Activated naive CD4-positive, alpha-beta T cell treated with anti-CD3 and anti-CD28 coated beads for 36 hours (primary cell): ENCODE measurements at regions of chr14 and their contacts with region 1.

Region 1: DNA sequence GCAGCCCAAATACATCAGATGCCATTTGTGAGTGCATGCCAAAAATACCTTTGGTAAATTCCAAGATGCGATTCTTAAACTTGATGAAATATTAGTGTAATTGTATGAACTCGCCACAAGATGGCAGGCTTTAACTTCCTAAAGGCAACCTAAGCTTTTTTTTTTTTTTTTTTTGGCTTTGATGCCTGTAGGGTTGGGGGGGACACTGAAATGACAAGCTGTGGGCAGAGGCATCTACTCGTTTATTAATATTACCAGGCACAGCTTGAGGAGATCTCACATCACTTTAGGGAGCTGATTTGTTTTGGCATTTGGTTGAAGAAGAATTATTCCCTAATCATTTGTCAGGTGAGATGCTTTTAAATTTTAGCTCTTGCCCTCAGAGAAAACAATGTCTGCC is 126.7 kb upstream of the CCDC196 start:
- DNase-seq: peak; percentile 10
- H3K4me3 Mint-ChIP-seq: no peak overlapping the region
- H3K27ac Mint-ChIP-seq: no peak overlapping the region
- H3K4me1 Mint-ChIP-seq: no peaks in the 10 kb centered on the region
- H3K27me3 Mint-ChIP-seq: no peaks in the 10 kb centered on the region

Region 2: DNA sequence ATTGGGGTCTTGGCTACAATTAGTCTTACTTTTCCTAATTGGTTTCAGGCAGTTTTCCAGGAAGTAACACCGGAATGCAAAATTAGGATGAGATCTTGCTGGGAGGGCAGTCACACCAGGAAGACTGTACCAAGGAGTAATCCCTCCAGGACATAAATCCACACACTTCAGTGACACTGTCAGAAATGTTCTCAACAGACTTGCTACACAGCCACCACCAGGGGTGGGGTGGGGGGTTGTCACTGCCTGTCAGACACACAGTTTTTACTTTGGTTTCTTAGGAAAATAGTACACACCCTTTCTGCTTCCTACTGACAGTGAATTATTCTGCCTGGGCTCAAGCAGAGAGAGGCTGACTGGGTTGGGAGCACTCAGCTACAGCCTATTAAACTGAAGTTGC is 23.8 kb after region 1 on chr14:
- CTCF ChIA-PET with region 1: interaction called, 10 read pairs
- intact Hi-C with region 1: no loop called
- DNase-seq: no peak
- H3K4me3 Mint-ChIP-seq: no peak overlapping the region
- H3K27ac Mint-ChIP-seq: no peak overlapping the region
- H3K4me1 Mint-ChIP-seq: no peaks in the 10 kb centered on the region
- H3K27me3 Mint-ChIP-seq: no peaks in the 10 kb centered on the region

Region 3: DNA sequence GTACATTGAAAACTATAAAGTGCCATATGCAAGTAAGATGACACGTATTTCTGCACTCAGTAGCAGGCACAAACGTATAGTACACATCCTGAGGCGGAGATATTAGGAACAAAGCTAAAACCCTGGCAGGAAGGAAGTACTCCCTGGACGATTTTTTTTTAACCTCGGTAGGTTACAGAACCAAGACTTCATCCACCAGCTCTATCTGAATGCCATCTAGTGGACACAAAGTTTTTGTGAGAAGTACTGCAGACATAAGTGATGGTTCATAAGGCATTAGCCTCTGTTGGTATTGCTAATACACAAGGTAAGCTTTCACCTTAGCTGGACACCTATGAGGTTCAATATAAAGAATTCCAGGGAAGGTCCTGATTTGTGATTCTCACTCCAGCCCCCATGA is 43.7 kb after region 1 on chr14:
- CTCF ChIA-PET with region 1: interaction called, 39 read pairs
- intact Hi-C with region 1: loop called (anchors 2 kb)
- DNase-seq: no peak
- H3K4me3 Mint-ChIP-seq: no peak overlapping the region
- H3K27ac Mint-ChIP-seq: no peak overlapping the region
- H3K4me1 Mint-ChIP-seq: peaks cover 4% of the 10 kb centered on the region
- H3K27me3 Mint-ChIP-seq: no peaks in the 10 kb centered on the region

Region 4: DNA sequence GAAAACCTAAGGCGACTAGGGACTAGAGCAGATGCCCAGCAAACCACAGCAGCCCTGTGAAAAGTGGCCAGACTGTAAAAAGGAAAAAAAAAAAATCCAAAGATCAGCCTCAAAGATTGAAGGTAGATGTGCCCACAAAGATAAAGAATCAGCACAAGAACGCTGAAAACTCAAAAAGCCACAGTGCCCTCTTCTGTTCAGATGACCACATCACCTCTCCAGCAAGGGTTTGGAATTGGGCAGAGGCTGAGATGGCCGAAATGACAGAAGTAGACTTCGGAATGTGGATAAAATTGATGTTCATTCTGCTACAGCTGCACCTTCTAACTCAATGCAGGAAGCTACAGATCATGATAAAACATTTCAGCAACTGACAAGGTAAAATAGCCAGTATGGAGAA is 302.9 kb after region 1 on chr14:
- CTCF ChIA-PET with region 1: interaction called, 4 read pairs
- intact Hi-C with region 1: loop called (anchors 1 kb)
- DNase-seq: peak; percentile 6
- H3K4me3 Mint-ChIP-seq: no peak overlapping the region
- H3K27ac Mint-ChIP-seq: no peak overlapping the region
- H3K4me1 Mint-ChIP-seq: no peaks in the 10 kb centered on the region
- H3K27me3 Mint-ChIP-seq: no peaks in the 10 kb centered on the region